Naive thymus-derived CD4-positive, alpha-beta T cell (primary cell): ENCODE measurements at regions of chr4 and their contacts with region 1.

Region 1: DNA sequence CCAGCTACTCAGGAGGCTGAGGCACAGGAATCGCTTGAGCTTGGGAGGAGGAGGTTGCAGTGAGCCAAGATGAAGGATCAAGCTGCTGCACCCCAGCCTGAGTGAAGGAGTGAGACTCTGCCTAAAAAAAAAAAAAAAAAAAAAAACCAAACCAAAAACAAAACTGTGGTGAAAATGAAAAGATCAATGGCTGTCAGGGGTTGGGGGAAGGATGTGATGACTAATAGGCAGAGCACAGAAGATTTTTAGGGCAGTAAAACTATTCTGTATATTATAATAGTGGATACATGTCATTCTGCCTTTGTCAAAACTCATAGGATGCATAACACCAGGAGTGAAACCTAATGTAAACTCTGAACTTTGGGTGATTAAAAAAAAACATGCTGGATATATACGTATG is 69.9 kb upstream of the ELOVL6 start:
- DNase-seq: no peak
- ATAC-seq: no peak
- H3K4me3 ChIP-seq: no peak overlapping the region
- H3K4me3 Mint-ChIP-seq: no peak overlapping the region
- H3K27ac ChIP-seq: no peak overlapping the region
- H3K27ac Mint-ChIP-seq: no peak overlapping the region
- H3K4me1 ChIP-seq: no peaks in the 10 kb centered on the region
- H3K4me1 Mint-ChIP-seq: peaks cover 0 to 10% (median 0%) of the 10 kb centered on the region in 7 donors
- H3K27me3 ChIP-seq: no peaks in the 10 kb centered on the region
- H3K27me3 Mint-ChIP-seq: peaks cover 0 to 30% (median 0%) of the 10 kb centered on the region in 5 donors

Region 2: DNA sequence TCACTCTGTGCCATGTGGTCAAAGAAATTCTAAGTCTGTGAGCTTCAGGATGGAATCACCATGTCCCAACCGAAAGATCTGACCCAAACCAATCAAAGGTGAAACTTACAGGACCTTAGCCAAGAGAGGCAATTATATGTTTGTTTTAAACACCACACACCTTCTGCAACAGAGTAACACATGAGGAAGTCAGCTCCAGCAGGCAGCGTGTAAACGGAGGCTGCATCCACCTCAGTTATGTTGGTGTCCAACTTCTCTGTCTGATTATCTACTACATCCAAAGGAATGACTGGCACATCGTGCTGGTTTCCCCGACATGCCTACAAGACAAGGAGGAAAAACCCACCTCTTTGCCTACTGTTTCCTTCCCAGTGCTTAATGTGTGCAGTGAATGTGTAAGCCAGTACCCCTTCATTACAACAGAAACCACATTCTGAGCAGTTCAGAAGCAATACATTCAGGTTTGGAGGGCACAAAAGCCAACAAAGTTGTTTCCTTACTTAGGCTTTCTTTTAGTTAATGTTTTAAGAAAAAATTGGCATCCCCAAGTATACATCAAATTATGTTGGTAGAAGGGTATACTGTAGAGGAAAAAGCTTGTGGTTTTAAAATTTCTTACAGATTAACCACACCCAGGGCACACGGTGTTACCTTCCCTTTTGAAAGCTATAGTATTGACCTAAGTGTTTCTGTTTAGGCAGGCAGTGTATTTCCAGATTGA is 577.5 kb before region 1 on chr4:
- CTCF ChIA-PET with region 1: no interaction called
- POLR2A ChIA-PET with region 1: no interaction called
- intact Hi-C with region 1: no loop called
- DNase-seq: peak in 7 of 9 donors; percentile 16 to 55 (median 31)
- ATAC-seq: peak; percentile 85
- H3K4me3 ChIP-seq: no peak overlapping the region
- H3K4me3 Mint-ChIP-seq: peak overlapping the region; percentile 40 to 79 (median 64)
- H3K27ac ChIP-seq: peak overlapping the region; percentile 42
- H3K27ac Mint-ChIP-seq: peak overlapping the region; percentile 59 to 90 (median 87)
- H3K4me1 ChIP-seq: peaks cover 17 to 23% of the 10 kb centered on the region in 2 donors
- H3K4me1 Mint-ChIP-seq: peaks cover 17 to 62% (median 40%) of the 10 kb centered on the region in 7 donors
- H3K27me3 ChIP-seq: no peaks in the 10 kb centered on the region
- H3K27me3 Mint-ChIP-seq: no peaks in the 10 kb centered on the region

Region 3: DNA sequence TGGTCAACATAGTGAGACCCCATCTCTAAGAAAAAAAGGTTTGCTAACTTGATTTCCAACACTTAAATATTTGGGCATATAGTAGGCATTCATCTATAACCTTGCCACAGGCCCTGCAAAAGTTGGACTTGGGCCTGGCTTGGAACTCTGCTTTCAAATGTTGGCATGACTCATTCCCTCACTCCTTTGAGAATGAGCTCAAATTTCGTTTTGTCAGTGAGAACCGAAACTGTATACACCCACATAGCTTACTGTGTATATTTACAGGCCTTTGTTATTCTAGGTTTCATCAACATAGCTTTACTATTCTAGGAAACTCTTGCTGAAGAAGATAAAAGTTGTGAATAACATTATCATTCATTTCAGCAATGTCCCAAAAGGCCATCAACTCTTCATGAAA is 18.8 kb after region 1 on chr4:
- CTCF ChIA-PET with region 1: no interaction called
- POLR2A ChIA-PET with region 1: no interaction called
- intact Hi-C with region 1: loop called in 1 of 2 experiments (anchors 1 kb)
- DNase-seq: no peak
- ATAC-seq: no peak
- H3K4me3 ChIP-seq: no peak overlapping the region
- H3K4me3 Mint-ChIP-seq: peak overlapping the region in 1 of 10 donors; percentile 41
- H3K27ac ChIP-seq: no peak overlapping the region
- H3K27ac Mint-ChIP-seq: peak overlapping the region in 1 of 9 donors; percentile 60
- H3K4me1 ChIP-seq: no peaks in the 10 kb centered on the region
- H3K4me1 Mint-ChIP-seq: peaks cover 0 to 10% (median 0%) of the 10 kb centered on the region in 7 donors
- H3K27me3 ChIP-seq: no peaks in the 10 kb centered on the region
- H3K27me3 Mint-ChIP-seq: peaks cover 0 to 24% (median 3%) of the 10 kb centered on the region in 5 donors

Region 4: GRCh38 chr4:110798687-110799086 is 530.3 kb after region 1 on chr4:
- CTCF ChIA-PET with region 1: no interaction called
- POLR2A ChIA-PET with region 1: no interaction called
- intact Hi-C with region 1: no loop called
- DNase-seq: no peak
- ATAC-seq: no peak
- H3K4me3 ChIP-seq: no peak overlapping the region
- H3K4me3 Mint-ChIP-seq: no peak overlapping the region
- H3K27ac ChIP-seq: no peak overlapping the region
- H3K27ac Mint-ChIP-seq: no peak overlapping the region
- H3K4me1 ChIP-seq: no peaks in the 10 kb centered on the region
- H3K4me1 Mint-ChIP-seq: no peaks in the 10 kb centered on the region
- H3K27me3 ChIP-seq: no peaks in the 10 kb centered on the region
- H3K27me3 Mint-ChIP-seq: peaks cover 0 to 4% (median 2%) of the 10 kb centered on the region in 5 donors